Kidney (tissue), 22 donors: ENCODE measurements at regions of chr6 and their contacts with region 1.

Region 1: GRCh38 chr6:73675466-73676098 is 20.4 kb upstream of the CD109 start:
- DNase-seq: peak; percentile 73 to 91 (median 82)
- H3K4me3 ChIP-seq: no peak overlapping the region
- H3K27ac ChIP-seq: no peak overlapping the region
- H3K4me1 ChIP-seq: no peaks in the 10 kb centered on the region
- H3K27me3 ChIP-seq: no peaks in the 10 kb centered on the region
- CTCF ChIP-seq: peak; percentile 95

Region 2: GRCh38 chr6:73722318-73723060 is 46.9 kb after region 1 on chr6:
- intact Hi-C with region 1: no loop called
- DNase-seq: no peak
- H3K4me3 ChIP-seq: no peak overlapping the region
- H3K27ac ChIP-seq: no peak overlapping the region
- H3K4me1 ChIP-seq: no peaks in the 10 kb centered on the region
- H3K27me3 ChIP-seq: no peaks in the 10 kb centered on the region
- CTCF ChIP-seq: no peak

Region 3: GRCh38 chr6:73732845-73733675 is 57.5 kb after region 1 on chr6:
- intact Hi-C with region 1: loop called (anchors 5 kb)
- DNase-seq: peak in 4 of 5 donors; percentile 60 to 89 (median 72)
- H3K4me3 ChIP-seq: no peak overlapping the region
- H3K27ac ChIP-seq: no peak overlapping the region
- H3K4me1 ChIP-seq: no peaks in the 10 kb centered on the region
- H3K27me3 ChIP-seq: no peaks in the 10 kb centered on the region
- CTCF ChIP-seq: peak; percentile 90

Region 4: GRCh38 chr6:74333406-74333805 is 657.8 kb after region 1 on chr6:
- intact Hi-C with region 1: no loop called
- DNase-seq: no peak
- H3K4me3 ChIP-seq: no peak overlapping the region
- H3K27ac ChIP-seq: no peak overlapping the region
- H3K4me1 ChIP-seq: no peaks in the 10 kb centered on the region
- H3K27me3 ChIP-seq: no peaks in the 10 kb centered on the region
- CTCF ChIP-seq: no peak